ENCODE measurements at regions of chr20 and their contacts with region 1.

Region 1: GRCh38 chr20:20860078-20860806 is 147.8 kb upstream of the RALGAPA2 start:
- DNase-seq: peak; percentile 82
- H3K4me3 Mint-ChIP-seq: no peak overlapping the region
- H3K27ac Mint-ChIP-seq: no peak overlapping the region
- H3K4me1 Mint-ChIP-seq: no peaks in the 10 kb centered on the region
- H3K27me3 Mint-ChIP-seq: peaks cover 16% of the 10 kb centered on the region

Region 2: GRCh38 chr20:20837574-20838021 is 22.6 kb before region 1 on chr20:
- CTCF ChIA-PET with region 1: interaction called, 19 read pairs
- POLR2A ChIA-PET with region 1: no interaction called
- DNase-seq: peak; percentile 43
- H3K4me3 Mint-ChIP-seq: no peak overlapping the region
- H3K27ac Mint-ChIP-seq: no peak overlapping the region
- H3K4me1 Mint-ChIP-seq: peaks cover 3% of the 10 kb centered on the region
- H3K27me3 Mint-ChIP-seq: peaks cover 12% of the 10 kb centered on the region

Region 3: GRCh38 chr20:20875716-20876115 is 15.5 kb after region 1 on chr20:
- CTCF ChIA-PET with region 1: interaction called, 10 read pairs
- POLR2A ChIA-PET with region 1: interaction called, 3 read pairs
- DNase-seq: no peak
- H3K4me3 Mint-ChIP-seq: no peak overlapping the region
- H3K27ac Mint-ChIP-seq: no peak overlapping the region
- H3K4me1 Mint-ChIP-seq: no peaks in the 10 kb centered on the region
- H3K27me3 Mint-ChIP-seq: peaks cover 8% of the 10 kb centered on the region

Region 4: DNA sequence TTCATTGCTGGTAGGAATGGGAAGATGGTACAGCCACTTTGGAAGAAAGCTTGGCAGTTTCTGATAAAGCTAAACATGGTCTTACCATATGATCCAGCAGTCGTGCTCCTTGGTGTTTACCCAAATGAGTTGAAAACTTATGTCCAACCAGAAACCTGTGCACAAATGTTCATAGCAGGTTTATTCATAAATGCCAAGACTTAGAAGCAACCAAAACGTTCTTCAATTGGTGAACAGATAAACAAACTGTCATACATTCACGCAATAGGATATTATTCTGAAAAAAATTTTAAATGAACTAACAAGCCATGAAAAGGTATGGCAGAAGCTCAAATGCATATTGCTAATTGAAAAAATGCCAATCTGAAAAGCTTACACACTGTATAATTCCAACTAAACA is 128.8 kb after region 1 on chr20:
- CTCF ChIA-PET with region 1: no interaction called
- POLR2A ChIA-PET with region 1: no interaction called
- DNase-seq: no peak
- H3K4me3 Mint-ChIP-seq: no peak overlapping the region
- H3K27ac Mint-ChIP-seq: no peak overlapping the region
- H3K4me1 Mint-ChIP-seq: no peaks in the 10 kb centered on the region
- H3K27me3 Mint-ChIP-seq: no peaks in the 10 kb centered on the region

Region 5: DNA sequence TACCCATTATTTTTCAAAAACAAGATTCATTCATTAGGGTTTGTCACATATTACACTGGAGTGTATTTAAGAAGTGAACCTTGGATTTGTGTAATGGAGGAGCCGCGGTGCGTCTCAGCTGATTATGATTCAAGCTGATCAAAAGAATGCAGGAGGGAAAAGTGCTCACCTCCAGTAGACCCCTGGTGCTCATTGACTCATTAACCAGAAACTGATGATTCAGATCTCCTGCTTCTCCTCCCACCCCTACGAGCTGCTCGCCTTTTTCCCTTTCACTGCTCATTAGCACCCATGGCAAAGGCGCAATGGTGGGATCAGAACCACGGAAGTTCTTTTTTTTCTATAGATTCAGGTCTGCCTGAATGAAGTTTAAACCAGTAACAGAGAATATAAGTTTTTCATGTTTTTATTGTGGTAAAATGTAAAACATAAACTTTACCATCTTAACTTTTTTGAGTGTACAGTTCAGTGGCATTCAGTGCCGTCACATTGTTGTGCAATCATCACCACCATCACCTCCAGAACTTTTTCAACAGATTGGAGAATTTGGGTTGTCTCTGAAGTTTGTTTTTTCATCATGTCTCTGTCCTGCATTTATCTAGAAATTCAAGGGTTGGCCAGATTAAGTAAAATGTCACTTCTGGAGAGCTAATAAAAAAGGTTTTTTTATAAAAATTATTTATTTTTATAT is 144.3 kb after region 1 on chr20:
- CTCF ChIA-PET with region 1: no interaction called
- POLR2A ChIA-PET with region 1: no interaction called
- DNase-seq: no peak
- H3K4me3 Mint-ChIP-seq: no peak overlapping the region
- H3K27ac Mint-ChIP-seq: no peak overlapping the region
- H3K4me1 Mint-ChIP-seq: no peaks in the 10 kb centered on the region
- H3K27me3 Mint-ChIP-seq: peaks cover 5% of the 10 kb centered on the region

Region 6: DNA sequence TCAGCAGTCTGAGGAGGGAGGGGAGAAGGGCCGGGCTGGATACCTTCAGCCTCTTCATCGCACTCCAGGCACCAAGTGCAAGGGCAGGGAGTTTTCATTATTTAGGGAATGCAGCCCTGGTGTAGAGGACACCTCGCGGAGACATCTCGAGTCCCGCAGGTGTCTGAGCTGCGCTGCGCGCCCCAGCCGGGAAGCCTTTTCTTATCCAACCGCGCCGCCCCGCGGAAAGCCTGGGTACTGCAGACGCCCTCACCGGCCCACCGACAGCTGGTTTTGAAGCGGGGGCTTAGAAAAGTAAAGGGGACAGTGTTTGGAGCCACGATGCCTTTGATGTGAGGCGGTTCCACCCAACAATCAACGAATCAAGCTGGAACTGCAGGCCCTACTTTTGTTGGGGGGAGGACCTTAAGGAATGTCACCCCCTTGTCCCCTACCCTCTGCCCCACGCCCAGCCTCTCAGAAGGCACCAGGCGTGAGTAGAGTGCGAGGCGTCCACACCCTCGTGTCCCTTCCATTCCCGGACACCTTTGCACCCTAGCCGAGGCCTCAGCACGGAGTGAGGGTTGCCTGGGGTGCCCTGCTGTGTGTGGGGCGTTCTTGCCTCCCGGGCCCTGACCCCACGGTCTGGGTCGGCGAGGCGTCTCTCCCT is 645.0 kb after region 1 on chr20:
- CTCF ChIA-PET with region 1: interaction called, 15 read pairs
- POLR2A ChIA-PET with region 1: no interaction called
- DNase-seq: peak; percentile 74
- H3K4me3 Mint-ChIP-seq: peak overlapping the region; percentile 39
- H3K27ac Mint-ChIP-seq: no peak overlapping the region
- H3K4me1 Mint-ChIP-seq: peaks cover 37% of the 10 kb centered on the region
- H3K27me3 Mint-ChIP-seq: peaks cover 52% of the 10 kb centered on the region